ENCODE measurements at regions of chr1 and their contacts with region 1.

Region 1: GRCh38 chr1:168893359-168893801 is 164.4 kb upstream of the DPT start:
- DNase-seq: peak; percentile 74 to 88
- ATAC-seq: peak; percentile 98 to 99
- H3K4me3 ChIP-seq: peak overlapping the region in 2 of 4 donors; percentile 11 to 19
- H3K27ac ChIP-seq: peak overlapping the region; percentile 83 to 95 (median 88)
- H3K4me1 ChIP-seq: peaks cover 8 to 21% of the 10 kb centered on the region in 2 donors
- H3K27me3 ChIP-seq: no peaks in the 10 kb centered on the region
- CTCF ChIP-seq: no peak
- POLR2A ChIP-seq: peak; percentile 11 to 47

Region 2: DNA sequence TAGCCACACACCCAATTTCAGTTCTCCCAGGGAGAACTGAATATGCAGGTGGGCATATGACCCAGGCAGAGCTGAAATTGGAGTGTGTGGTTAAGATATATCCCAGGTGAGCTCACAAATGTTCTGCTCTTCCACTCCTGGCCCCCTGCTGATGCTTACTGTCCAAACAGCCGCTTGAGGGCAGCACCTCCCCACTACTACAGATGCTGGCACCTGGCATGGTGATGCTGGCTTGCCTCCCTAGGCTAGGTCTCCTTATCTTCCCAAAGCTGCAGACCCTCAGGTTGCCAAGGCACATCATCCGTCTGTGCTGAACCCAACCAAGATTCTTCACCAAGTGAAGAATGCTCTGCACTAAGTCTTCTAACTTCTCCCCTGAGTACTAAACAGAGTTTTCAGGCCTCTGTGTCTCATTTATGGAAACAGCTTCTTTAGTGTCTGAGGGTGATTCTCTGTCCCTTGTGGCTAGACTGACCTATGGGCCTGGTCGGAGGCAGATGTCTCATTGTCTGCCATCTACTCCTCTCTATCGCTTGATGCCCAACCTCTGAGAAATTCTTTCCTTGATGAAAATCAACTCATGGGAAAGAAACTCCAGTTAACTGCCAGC is 289.8 kb before region 1 on chr1:
- in situ Hi-C with region 1: loop called in 2 of 4 experiments (anchors 10 kb)
- intact Hi-C with region 1: loop called (anchors 5 kb)
- DNase-seq: peak; percentile 68 to 79
- ATAC-seq: peak; percentile 53 to 69
- H3K4me3 ChIP-seq: no peak overlapping the region
- H3K27ac ChIP-seq: peak overlapping the region; percentile 17 to 100 (median 56)
- H3K4me1 ChIP-seq: peaks cover 28 to 32% of the 10 kb centered on the region in 2 donors
- H3K27me3 ChIP-seq: no peaks in the 10 kb centered on the region
- CTCF ChIP-seq: peak; percentile 86 to 93 (median 87)
- POLR2A ChIP-seq: no peak

Region 3: DNA sequence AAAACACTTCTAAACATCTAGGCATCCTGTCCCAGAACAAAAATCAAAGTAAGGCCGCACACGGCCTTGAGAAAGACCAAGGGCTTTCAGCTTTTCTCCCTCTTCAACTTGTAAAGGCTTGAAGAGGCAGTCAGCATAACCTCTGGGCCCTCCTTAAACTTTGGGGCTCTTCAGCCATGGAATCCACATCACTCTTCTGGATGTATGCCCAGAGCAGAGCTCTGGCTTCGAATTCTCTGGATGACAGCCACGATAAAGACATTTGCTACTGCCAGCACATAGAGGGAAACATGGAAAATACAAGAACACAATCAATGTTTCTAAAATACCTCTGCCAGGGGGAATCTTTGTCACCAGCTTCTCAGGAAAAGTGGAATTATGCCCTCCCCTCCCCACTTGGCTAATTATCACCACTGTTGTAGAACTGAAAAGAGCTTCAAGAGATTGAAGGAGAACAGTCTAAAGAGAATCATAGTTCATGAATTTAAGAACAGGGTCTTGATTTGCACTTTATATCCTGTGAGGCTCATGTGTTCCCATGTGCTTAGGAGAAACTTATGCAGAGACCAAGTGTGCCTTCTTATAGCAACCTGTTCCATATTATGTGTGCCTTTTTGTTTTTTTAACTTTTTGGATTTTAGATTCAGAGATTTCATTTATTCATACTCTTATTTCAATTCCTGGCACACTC is 125.3 kb before region 1 on chr1:
- in situ Hi-C with region 1: no loop called
- intact Hi-C with region 1: no loop called
- DNase-seq: peak in 1 of 2 donors; percentile 26
- ATAC-seq: no peak
- H3K4me3 ChIP-seq: no peak overlapping the region
- H3K27ac ChIP-seq: no peak overlapping the region
- H3K4me1 ChIP-seq: peaks cover 7% of the 10 kb centered on the region in 2 donors
- H3K27me3 ChIP-seq: no peaks in the 10 kb centered on the region
- CTCF ChIP-seq: no peak
- POLR2A ChIP-seq: no peak

Region 4: GRCh38 chr1:168783458-168784230 is 109.7 kb before region 1 on chr1:
- in situ Hi-C with region 1: no loop called
- intact Hi-C with region 1: loop called (anchors 5 kb)
- DNase-seq: peak; percentile 13 to 14
- ATAC-seq: peak; percentile 89 to 94
- H3K4me3 ChIP-seq: no peak overlapping the region
- H3K27ac ChIP-seq: peak overlapping the region; percentile 10 to 46 (median 26)
- H3K4me1 ChIP-seq: peaks cover 8 to 13% of the 10 kb centered on the region in 2 donors
- H3K27me3 ChIP-seq: no peaks in the 10 kb centered on the region
- CTCF ChIP-seq: no peak
- POLR2A ChIP-seq: no peak

Region 5: GRCh38 chr1:169091480-169091941 is 198.1 kb after region 1 on chr1:
- in situ Hi-C with region 1: no loop called
- intact Hi-C with region 1: loop called (anchors 5 kb)
- DNase-seq: peak in 1 of 2 donors; percentile 65
- ATAC-seq: peak; percentile 84 to 92
- H3K4me3 ChIP-seq: no peak overlapping the region
- H3K27ac ChIP-seq: peak overlapping the region in 2 of 4 donors; percentile 7 to 28
- H3K4me1 ChIP-seq: peaks cover 0 to 4% of the 10 kb centered on the region in 2 donors
- H3K27me3 ChIP-seq: no peaks in the 10 kb centered on the region
- CTCF ChIP-seq: no peak
- POLR2A ChIP-seq: no peak

Region 6: DNA sequence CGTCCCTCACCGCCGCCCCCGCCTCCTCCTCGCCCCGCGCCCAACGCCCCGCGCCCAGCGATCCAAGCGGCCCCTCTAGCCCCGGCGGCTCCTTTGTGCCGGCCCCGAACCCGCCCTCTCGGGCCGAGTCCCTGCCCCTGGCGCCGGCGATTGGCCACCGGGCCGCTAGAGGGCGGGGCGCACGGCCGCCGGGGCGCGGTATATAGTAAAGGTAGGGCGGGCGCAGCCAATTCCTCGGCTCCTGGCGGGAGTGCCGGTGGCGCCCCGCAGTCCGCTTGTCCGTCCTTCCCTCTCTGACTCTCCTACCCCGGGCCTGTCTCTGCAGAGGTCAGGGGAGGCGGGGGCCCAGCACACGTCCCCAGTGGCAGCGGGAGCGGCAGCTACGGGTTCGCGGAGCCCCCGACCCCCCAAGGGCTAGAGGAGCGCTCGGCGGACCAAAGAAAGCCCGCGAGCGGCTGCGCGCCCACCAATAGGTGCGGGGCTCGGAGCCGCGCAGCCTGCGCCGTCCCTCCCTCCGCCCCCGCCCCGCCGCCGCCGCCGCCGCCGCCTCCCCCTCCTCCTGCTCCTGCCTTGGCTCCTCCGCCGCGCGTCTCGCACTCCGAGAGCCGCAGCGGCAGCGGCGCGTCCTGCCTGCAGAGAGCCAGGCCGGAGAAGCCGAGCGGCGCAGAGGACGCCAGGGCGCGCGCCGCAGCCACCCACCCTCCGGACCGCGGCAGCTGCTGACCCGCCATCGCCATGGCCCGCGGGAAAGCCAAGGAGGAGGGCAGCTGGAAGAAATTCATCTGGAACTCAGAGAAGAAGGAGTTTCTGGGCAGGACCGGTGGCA is 212.9 kb after region 1 on chr1 and contains the start of gene ATP1B1:
- in situ Hi-C with region 1: no loop called
- intact Hi-C with region 1: loop called (anchors 2 kb)
- DNase-seq: peak; percentile 82 to 89
- ATAC-seq: peak; percentile 57 to 64
- H3K4me3 ChIP-seq: peak within 1 kb of the TSS; percentile 65 to 94 (median 77)
- H3K27ac ChIP-seq: peak within 1 kb of the TSS; percentile 93 to 99 (median 96)
- H3K4me1 ChIP-seq: peaks cover 18 to 25% of the 10 kb centered on the region in 2 donors
- H3K27me3 ChIP-seq: no peaks in the 10 kb centered on the region
- CTCF ChIP-seq: peak; percentile 52 to 94 (median 83)
- POLR2A ChIP-seq: peak; percentile 97 to 99
- total RNA-seq, gene ATP1B1: 111 to 377 (median 324) TPM